K562 (cell line): ENCODE measurements at regions of chr5 and their contacts with region 1.

Region 1: GRCh38 chr5:131165119-131165727 is at the start of gene HINT1:
- DNase-seq: peak; percentile 94 to 97 (median 96)
- ATAC-seq: peak; percentile 88
- H3K4me3 ChIP-seq: peak within 1 kb of the TSS; percentile 82
- H3K27ac ChIP-seq: peak within 1 kb of the TSS; percentile 97
- H3K4me1 ChIP-seq: peaks cover 21 to 25% of the 10 kb centered on the region in 2 experiments
- H3K27me3 ChIP-seq: no peaks in the 10 kb centered on the region
- CTCF ChIP-seq: peak in 2 of 3 experiments; percentile 40 to 44; a peak in 4 of 6 replicates
- EP300 ChIP-seq: no peak
- POLR2A ChIP-seq: peak; percentile 90
- RAD21 ChIP-seq: peak in 1 of 2 experiments; percentile 34; a peak in 2 of 4 replicates
- polyA plus RNA-seq, gene HINT1: 1,005 to 1,027 TPM

Region 2: GRCh38 chr5:131148835-131149234 is 16.4 kb before region 1 on chr5:
- CTCF ChIA-PET with region 1: no interaction called
- POLR2A ChIA-PET with region 1: interaction called, 65 read pairs
- in situ Hi-C with region 1: no loop called
- intact Hi-C with region 1: no loop called
- DNase-seq: no peak
- ATAC-seq: no peak
- H3K4me3 ChIP-seq: no peak overlapping the region
- H3K27ac ChIP-seq: no peak overlapping the region
- H3K4me1 ChIP-seq: no peaks in the 10 kb centered on the region
- H3K27me3 ChIP-seq: no peaks in the 10 kb centered on the region
- CTCF ChIP-seq: no peak
- EP300 ChIP-seq: no peak
- POLR2A ChIP-seq: no peak
- RAD21 ChIP-seq: no peak

Region 3: GRCh38 chr5:131242728-131243255 is 77.6 kb after region 1 on chr5:
- CTCF ChIA-PET with region 1: no interaction called
- POLR2A ChIA-PET with region 1: no interaction called
- in situ Hi-C with region 1: no loop called
- intact Hi-C with region 1: no loop called
- DNase-seq: no peak
- ATAC-seq: no peak
- H3K4me3 ChIP-seq: no peak overlapping the region
- H3K27ac ChIP-seq: no peak overlapping the region
- H3K4me1 ChIP-seq: no peaks in the 10 kb centered on the region
- H3K27me3 ChIP-seq: no peaks in the 10 kb centered on the region
- CTCF ChIP-seq: no peak
- EP300 ChIP-seq: no peak
- POLR2A ChIP-seq: no peak
- RAD21 ChIP-seq: no peak